Gastrocnemius medialis (tissue), 4 donors: ENCODE measurements at regions of chr9 and their contacts with region 1.

Region 1: DNA sequence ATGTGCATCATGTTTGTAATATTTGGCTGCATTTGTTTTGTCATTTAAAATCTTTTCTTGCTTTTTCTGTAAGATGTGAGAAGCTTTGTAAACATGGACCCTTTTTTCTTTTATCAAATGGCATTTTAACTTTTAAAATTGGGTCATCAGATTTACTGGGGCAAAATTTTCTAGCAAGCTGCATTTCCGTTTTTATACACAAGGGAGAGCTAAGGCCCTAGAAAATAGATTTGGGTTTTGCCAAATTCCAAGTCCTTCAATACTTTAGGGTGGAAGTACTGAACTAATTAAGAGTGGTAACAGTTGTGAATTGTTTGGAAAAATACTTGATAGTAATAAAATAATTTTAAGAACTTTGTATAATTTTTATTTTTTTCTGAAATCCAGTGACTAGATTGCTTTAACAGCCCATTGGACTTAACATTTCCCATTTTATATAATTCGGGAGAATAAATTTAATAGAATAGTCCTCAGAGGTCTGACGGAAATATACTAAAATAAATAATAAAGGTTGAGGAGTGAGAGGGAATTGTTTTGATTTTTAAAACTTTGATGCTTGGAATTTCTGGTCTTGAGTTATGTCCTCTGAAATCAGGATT is 117.4 kb downstream of the SMARCA2 start:
- DNase-seq: no peak
- ATAC-seq: peak in 1 of 2 donors; percentile 61
- H3K4me3 ChIP-seq: no peak overlapping the region
- H3K27ac ChIP-seq: no peak overlapping the region
- H3K4me1 ChIP-seq: peaks cover 32 to 57% of the 10 kb centered on the region in 2 donors
- H3K27me3 ChIP-seq: no peaks in the 10 kb centered on the region
- CTCF ChIP-seq: peak; percentile 48 to 83 (median 76)
- POLR2A ChIP-seq: no peak

Region 2: DNA sequence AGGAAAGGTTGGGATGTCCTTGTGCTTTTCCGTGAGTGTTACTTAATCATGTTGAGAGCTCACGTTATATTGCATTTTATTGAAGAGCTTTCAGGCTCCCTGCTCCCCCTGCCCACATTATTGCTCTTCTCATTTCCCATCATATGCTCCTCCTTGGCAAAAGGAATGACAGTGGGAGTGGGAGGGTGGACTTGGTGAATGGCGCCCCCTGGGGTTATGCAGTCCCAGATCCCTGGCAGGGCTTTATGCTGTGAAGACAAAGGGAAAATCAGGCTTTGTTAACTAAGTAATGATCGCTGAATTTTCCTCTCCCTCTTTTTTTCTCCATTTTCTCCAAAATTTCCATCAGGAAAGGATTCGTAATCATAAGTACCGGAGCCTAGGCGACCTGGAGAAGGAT is 49.2 kb after region 1 on chr9:
- in situ Hi-C with region 1: no loop called
- intact Hi-C with region 1: loop called (anchors 1 kb)
- DNase-seq: peak in 1 of 2 donors; percentile 26
- ATAC-seq: peak in 1 of 2 donors; percentile 49
- H3K4me3 ChIP-seq: no peak overlapping the region
- H3K27ac ChIP-seq: no peak overlapping the region
- H3K4me1 ChIP-seq: peaks cover 9 to 13% of the 10 kb centered on the region in 2 donors
- H3K27me3 ChIP-seq: no peaks in the 10 kb centered on the region
- CTCF ChIP-seq: peak in 4 of 5 experiments; percentile 33 to 59 (median 48)
- POLR2A ChIP-seq: no peak

Region 3: DNA sequence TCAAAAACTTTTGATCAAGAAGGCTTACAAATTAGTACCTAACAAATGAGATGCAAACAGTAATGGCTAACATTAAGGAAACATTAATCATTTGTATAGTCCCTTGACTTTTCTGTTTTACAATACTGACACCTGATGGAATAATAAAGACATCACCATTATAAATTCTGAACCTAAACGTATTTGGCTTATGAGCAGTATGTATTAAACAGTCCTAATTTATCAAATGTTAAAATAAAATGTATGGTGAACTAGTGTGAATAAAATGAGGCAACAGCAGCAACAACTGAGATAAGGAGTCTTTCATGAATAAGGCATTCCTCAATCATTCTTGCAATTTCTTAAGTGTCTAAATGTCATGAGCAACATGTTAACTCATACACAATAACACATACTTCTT is 705.3 kb after region 1 on chr9:
- in situ Hi-C with region 1: no loop called
- intact Hi-C with region 1: loop called (anchors 5 kb)
- DNase-seq: no peak
- ATAC-seq: no peak
- H3K4me3 ChIP-seq: peak overlapping the region in 1 of 4 donors; percentile 25
- H3K27ac ChIP-seq: peak overlapping the region in 3 of 4 donors; percentile 2 to 50 (median 21)
- H3K4me1 ChIP-seq: peaks cover 43 to 45% of the 10 kb centered on the region in 2 donors
- H3K27me3 ChIP-seq: no peaks in the 10 kb centered on the region
- CTCF ChIP-seq: no peak
- POLR2A ChIP-seq: no peak